ENCODE measurements at regions of chr4 and their contacts with region 1.

Region 1: GRCh38 chr4:62912531-62912930 is 1496.7 kb downstream of the TECRL start:
- DNase-seq: no peak

Region 2: GRCh38 chr4:62872856-62873255 is 39.7 kb before region 1 on chr4:
- intact Hi-C with region 1: loop called in 1 of 2 experiments (anchors 1 kb)
- DNase-seq: no peak